Activated B cell treated with CpG ODN at 0.5 μM for 24 hours (primary cell): ENCODE measurements at regions of chr6 and their contacts with region 1.

Region 1: DNA sequence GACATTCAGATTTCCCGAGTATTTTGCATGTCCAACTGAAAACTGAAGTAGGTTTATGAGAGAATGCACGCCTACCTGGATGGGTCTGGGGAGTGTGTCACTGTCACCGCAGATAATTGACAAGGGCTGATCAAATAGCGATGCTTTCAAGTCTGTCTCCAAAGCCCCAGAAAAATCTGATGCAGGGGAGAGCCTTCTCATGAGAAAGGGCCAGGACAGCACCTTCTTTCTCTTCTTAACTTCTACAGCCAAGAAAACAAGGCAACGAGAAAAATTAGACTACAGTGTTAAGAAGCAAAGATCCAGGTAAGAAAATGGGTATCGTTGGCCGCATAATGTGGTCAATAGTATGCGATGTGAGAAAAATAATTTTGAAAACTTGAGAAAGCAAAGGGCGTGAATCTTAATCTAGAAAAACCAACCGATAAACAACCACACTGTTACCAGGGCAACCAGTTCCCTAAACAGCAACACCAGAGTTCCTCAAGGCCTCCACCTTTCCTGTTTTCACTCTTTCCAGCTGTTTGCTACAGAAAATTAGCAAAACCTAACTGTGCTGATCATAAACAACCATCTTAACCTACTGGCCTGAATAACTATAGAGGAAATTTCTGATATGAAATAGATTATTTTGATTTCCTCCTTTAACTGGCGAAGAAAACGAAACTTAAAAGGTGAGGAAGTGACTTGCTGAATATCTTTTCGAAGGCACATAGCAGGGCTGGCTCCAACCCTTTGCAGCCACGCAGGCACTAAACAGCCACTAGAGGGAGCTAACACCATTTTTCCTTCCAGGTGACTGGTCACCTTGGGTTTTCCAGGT is 2.6 kb downstream of the TAGAP start:
- DNase-seq: no peak
- ATAC-seq: peak; percentile 34
- H3K4me3 Mint-ChIP-seq: peak overlapping the region; percentile 99
- H3K27ac Mint-ChIP-seq: peak overlapping the region; percentile 100
- H3K4me1 Mint-ChIP-seq: peaks cover 76% of the 10 kb centered on the region
- H3K27me3 Mint-ChIP-seq: no peaks in the 10 kb centered on the region
- CTCF ChIP-seq: peak; percentile 91

Region 2: GRCh38 chr6:158377860-158378259 is 664.4 kb before region 1 on chr6:
- CTCF ChIA-PET with region 1: no interaction called
- POLR2A ChIA-PET with region 1: no interaction called
- intact Hi-C with region 1: no loop called
- DNase-seq: no peak
- ATAC-seq: no peak
- H3K4me3 Mint-ChIP-seq: no peak overlapping the region
- H3K27ac Mint-ChIP-seq: no peak overlapping the region
- H3K4me1 Mint-ChIP-seq: peaks cover 32% of the 10 kb centered on the region
- H3K27me3 Mint-ChIP-seq: no peaks in the 10 kb centered on the region
- CTCF ChIP-seq: no peak

Region 3: DNA sequence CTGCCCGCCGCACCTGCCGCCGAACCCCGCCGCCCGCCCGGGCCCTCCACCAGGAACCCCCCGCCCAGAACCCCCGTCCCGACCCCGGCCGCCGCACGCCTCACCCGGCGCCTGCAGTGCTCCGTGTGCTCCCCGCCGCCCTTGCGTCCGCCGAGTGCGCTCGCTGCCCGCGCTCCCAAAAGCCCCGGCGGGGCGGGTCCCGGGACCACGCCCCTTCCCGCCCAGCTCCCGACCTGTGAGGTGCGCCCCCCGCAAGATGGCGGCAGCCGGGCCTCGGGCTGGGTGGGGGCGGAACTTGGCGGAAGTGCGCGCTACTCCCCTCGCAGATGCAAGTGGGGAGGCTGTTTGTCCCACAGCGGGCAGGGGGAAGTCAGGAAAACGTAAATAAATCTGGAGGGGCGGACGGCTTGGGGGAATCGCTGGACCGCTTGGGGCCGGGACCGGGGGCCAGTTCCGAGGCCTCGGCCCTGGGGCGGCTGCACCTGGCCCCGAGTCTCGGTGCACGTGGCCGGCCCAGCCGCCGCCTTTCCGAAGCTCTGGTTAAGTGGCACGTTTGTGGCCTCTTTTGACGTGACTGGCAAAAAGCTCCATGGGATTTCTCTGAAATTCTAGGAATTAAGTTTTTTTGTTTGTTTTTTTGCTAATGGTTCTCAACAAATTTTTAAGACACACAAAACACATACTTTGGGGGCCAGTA is 222.9 kb before region 1 on chr6 and contains the start of gene EZR:
- CTCF ChIA-PET with region 1: no interaction called
- POLR2A ChIA-PET with region 1: no interaction called
- intact Hi-C with region 1: loop called (anchors 2 kb)
- DNase-seq: peak; percentile 80
- ATAC-seq: peak; percentile 66
- H3K4me3 Mint-ChIP-seq: peak within 1 kb of the TSS; percentile 100
- H3K27ac Mint-ChIP-seq: peak within 1 kb of the TSS; percentile 95
- H3K4me1 Mint-ChIP-seq: peaks cover 51% of the 10 kb centered on the region
- H3K27me3 Mint-ChIP-seq: no peaks in the 10 kb centered on the region
- CTCF ChIP-seq: no peak
- total RNA-seq, gene EZR: 488 and 489 TPM in 2 replicates

Region 4: DNA sequence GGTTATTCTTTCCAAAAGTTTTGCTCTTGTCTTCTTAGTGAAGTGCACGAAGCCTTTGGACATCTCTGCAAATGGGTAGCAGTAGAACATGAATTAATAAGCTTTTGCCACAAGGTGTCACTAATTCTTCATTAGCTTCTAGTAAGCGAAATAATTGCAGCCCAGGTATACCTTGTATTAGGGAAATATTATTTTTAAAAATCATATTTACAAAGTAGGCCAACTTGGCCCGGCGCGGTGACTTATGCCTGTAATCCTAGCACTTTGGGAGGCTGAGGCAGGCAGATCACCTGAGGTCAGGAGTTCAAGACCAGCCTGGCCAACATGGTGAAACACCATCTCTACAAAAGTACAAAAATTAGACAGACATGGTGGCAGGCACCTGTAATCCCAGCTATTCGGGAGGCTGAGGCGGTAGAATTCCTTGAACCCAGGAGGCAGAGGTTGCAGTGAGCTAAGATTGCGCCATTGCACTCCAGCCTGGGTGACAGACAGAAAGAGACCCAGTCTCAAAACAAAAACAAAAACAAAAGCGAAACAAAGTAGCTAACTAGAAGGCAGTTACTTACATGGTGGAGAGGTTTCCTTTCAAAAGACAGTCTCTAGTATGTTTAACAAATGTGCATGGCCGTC is 33.4 kb before region 1 on chr6:
- CTCF ChIA-PET with region 1: interaction called, 113 read pairs
- POLR2A ChIA-PET with region 1: interaction called, 128 read pairs
- intact Hi-C with region 1: loop called (anchors 1 kb)
- DNase-seq: no peak
- ATAC-seq: peak; percentile 74
- H3K4me3 Mint-ChIP-seq: peak overlapping the region; percentile 5
- H3K27ac Mint-ChIP-seq: peak overlapping the region; percentile 24
- H3K4me1 Mint-ChIP-seq: peaks cover 41% of the 10 kb centered on the region
- H3K27me3 Mint-ChIP-seq: no peaks in the 10 kb centered on the region
- CTCF ChIP-seq: no peak

Region 5: GRCh38 chr6:159062564-159062945 is 20.3 kb after region 1 on chr6:
- CTCF ChIA-PET with region 1: interaction called, 6 read pairs
- POLR2A ChIA-PET with region 1: interaction called, 89 read pairs
- intact Hi-C with region 1: loop called (anchors 1 kb)
- DNase-seq: no peak
- ATAC-seq: peak; percentile 87
- H3K4me3 Mint-ChIP-seq: peak overlapping the region; percentile 50
- H3K27ac Mint-ChIP-seq: peak overlapping the region; percentile 95
- H3K4me1 Mint-ChIP-seq: peaks cover 73% of the 10 kb centered on the region
- H3K27me3 Mint-ChIP-seq: no peaks in the 10 kb centered on the region
- CTCF ChIP-seq: no peak

Region 6: GRCh38 chr6:159098636-159099106 is 56.5 kb after region 1 on chr6:
- CTCF ChIA-PET with region 1: interaction called, 99 read pairs
- POLR2A ChIA-PET with region 1: interaction called, 1,007 read pairs
- intact Hi-C with region 1: loop called (anchors 1 kb)
- DNase-seq: peak; percentile 56
- ATAC-seq: peak; percentile 51
- H3K4me3 Mint-ChIP-seq: peak overlapping the region; percentile 81
- H3K27ac Mint-ChIP-seq: peak overlapping the region; percentile 99
- H3K4me1 Mint-ChIP-seq: peaks cover 93% of the 10 kb centered on the region
- H3K27me3 Mint-ChIP-seq: no peaks in the 10 kb centered on the region
- CTCF ChIP-seq: no peak

Region 7: GRCh38 chr6:159125014-159125609 is 82.9 kb after region 1 on chr6:
- CTCF ChIA-PET with region 1: interaction called, 4 read pairs
- POLR2A ChIA-PET with region 1: interaction called, 35 read pairs
- intact Hi-C with region 1: no loop called
- DNase-seq: no peak
- ATAC-seq: no peak
- H3K4me3 Mint-ChIP-seq: no peak overlapping the region
- H3K27ac Mint-ChIP-seq: no peak overlapping the region
- H3K4me1 Mint-ChIP-seq: peaks cover 69% of the 10 kb centered on the region
- H3K27me3 Mint-ChIP-seq: no peaks in the 10 kb centered on the region
- CTCF ChIP-seq: no peak

Region 8: DNA sequence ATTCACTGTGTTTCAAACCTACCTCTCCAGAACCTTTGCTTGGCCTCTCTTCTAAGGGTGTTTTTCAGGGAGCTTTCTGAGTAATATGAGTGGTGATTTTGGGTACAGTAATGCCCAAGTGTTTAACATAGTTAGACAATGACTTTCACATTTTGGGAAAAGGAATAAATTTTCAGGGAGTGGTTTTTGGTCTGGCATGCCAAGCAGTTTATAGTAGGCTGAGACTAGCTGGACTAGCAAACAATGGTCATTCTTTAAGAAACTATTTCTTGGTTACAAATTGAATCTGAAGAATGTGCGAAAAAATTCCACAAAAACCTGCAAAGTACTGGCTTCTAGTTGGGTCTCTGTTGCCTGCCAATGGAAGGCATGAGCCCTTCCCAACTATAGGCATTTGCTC is 142.3 kb after region 1 on chr6:
- CTCF ChIA-PET with region 1: no interaction called
- POLR2A ChIA-PET with region 1: no interaction called
- intact Hi-C with region 1: no loop called
- DNase-seq: no peak
- ATAC-seq: no peak
- H3K4me3 Mint-ChIP-seq: no peak overlapping the region
- H3K27ac Mint-ChIP-seq: no peak overlapping the region
- H3K4me1 Mint-ChIP-seq: peaks cover 2% of the 10 kb centered on the region
- H3K27me3 Mint-ChIP-seq: peaks cover 17% of the 10 kb centered on the region
- CTCF ChIP-seq: no peak

Region 9: GRCh38 chr6:159376516-159377158 is 334.4 kb after region 1 on chr6:
- CTCF ChIA-PET with region 1: no interaction called
- POLR2A ChIA-PET with region 1: no interaction called
- intact Hi-C with region 1: no loop called
- DNase-seq: no peak
- ATAC-seq: no peak
- H3K4me3 Mint-ChIP-seq: no peak overlapping the region
- H3K27ac Mint-ChIP-seq: no peak overlapping the region
- H3K4me1 Mint-ChIP-seq: no peaks in the 10 kb centered on the region
- H3K27me3 Mint-ChIP-seq: peaks cover 6% of the 10 kb centered on the region
- CTCF ChIP-seq: no peak